ENCODE measurements at regions of chr2 and their contacts with region 1.

Region 1: GRCh38 chr2:96213379-96213778 is 4.8 kb upstream of the STARD7 start:
- DNase-seq: no peak
- H3K4me3 ChIP-seq: no peak overlapping the region
- H3K27ac ChIP-seq: no peak overlapping the region
- H3K4me1 ChIP-seq: peaks cover 8 to 14% of the 10 kb centered on the region in 2 donors
- H3K27me3 ChIP-seq: no peaks in the 10 kb centered on the region
- CTCF ChIP-seq: no peak
- POLR2A ChIP-seq: no peak

Region 2: GRCh38 chr2:96245609-96246390 is 32.4 kb after region 1 on chr2:
- intact Hi-C with region 1: loop called (anchors 5 to 10 kb)
- DNase-seq: peak in 4 of 7 donors; percentile 48 to 66 (median 63)
- H3K4me3 ChIP-seq: no peak overlapping the region
- H3K27ac ChIP-seq: peak overlapping the region in 2 of 5 donors; percentile 4 to 81
- H3K4me1 ChIP-seq: peaks cover 7 to 45% of the 10 kb centered on the region in 2 donors
- H3K27me3 ChIP-seq: no peaks in the 10 kb centered on the region
- CTCF ChIP-seq: no peak
- POLR2A ChIP-seq: no peak

Region 3: GRCh38 chr2:96353032-96353561 is 139.7 kb after region 1 on chr2:
- intact Hi-C with region 1: no loop called
- DNase-seq: peak in 6 of 7 donors; percentile 45 to 81 (median 56)
- H3K4me3 ChIP-seq: no peak overlapping the region
- H3K27ac ChIP-seq: peak overlapping the region in 2 of 5 donors; percentile 64 to 77
- H3K4me1 ChIP-seq: peaks cover 0 to 7% of the 10 kb centered on the region in 2 donors
- H3K27me3 ChIP-seq: no peaks in the 10 kb centered on the region
- CTCF ChIP-seq: no peak
- POLR2A ChIP-seq: no peak

Measured in adrenal gland (tissue), 19 donors.